ENCODE measurements at regions of chr14 and their contacts with region 1.

Region 1: GRCh38 chr14:20343092-20343861 is at the start of gene PARP2:
- DNase-seq: peak; percentile 85 to 97 (median 89)
- ATAC-seq: peak; percentile 96
- H3K4me3 ChIP-seq: peak within 1 kb of the TSS; percentile 68
- H3K27ac ChIP-seq: peak within 1 kb of the TSS; percentile 90
- H3K4me1 ChIP-seq: peaks cover 0 to 4% of the 10 kb centered on the region in 2 experiments; a peak in 2 of 5 replicates
- H3K27me3 ChIP-seq: no peaks in the 10 kb centered on the region
- CTCF ChIP-seq: no peak
- EP300 ChIP-seq: no peak; the same call in 1 of the 2 replicates
- POLR2A ChIP-seq: peak; percentile 97
- RAD21 ChIP-seq: no peak
- polyA plus RNA-seq, gene PARP2: 25.2 to 34.6 TPM

Region 2: DNA sequence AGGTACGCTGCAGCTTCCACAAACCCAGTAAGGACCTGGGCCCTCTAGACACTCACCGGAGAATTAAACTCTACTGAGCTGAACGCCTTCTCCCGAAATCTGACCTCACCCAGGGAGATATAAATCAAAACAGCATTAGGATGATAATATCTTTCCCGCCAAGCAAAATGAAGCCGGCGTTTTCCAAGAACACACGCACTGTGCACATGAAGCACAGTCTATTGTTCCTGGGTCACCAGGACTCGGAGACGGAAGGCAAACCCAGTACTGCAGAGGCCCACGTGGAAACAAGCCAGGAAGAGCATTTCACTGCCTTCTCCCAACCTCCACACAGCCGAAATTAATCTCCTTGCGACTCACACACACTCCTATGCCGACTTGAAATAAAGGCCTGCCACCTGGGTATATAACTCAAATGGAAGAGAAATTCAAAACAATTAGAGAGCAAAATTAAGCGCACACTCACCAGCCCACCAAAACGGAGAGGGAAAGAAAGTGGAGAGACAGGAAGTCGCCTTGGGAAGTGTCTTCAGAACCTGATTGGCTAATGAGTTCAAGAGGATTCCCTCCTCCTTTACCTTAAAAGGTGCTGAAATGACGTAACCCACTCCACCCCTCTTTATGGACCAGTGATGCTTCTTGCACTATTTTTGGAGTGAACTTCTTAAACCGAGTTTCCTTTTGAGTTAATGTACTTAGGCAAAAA is 10.3 kb before region 1 on chr14 and contains the start of gene CCNB1IP1:
- CTCF ChIA-PET with region 1: interaction called, 4 read pairs
- POLR2A ChIA-PET with region 1: interaction called, 10 read pairs
- in situ Hi-C with region 1: no loop called
- intact Hi-C with region 1: loop called (anchors 1 kb)
- DNase-seq: peak; percentile 70 to 91 (median 82)
- ATAC-seq: peak; percentile 91
- H3K4me3 ChIP-seq: peak within 1 kb of the TSS; percentile 87
- H3K27ac ChIP-seq: peak within 1 kb of the TSS; percentile 90
- H3K4me1 ChIP-seq: peaks cover 0 to 11% of the 10 kb centered on the region in 2 experiments; a peak in 2 of 5 replicates
- H3K27me3 ChIP-seq: no peaks in the 10 kb centered on the region
- CTCF ChIP-seq: no peak
- EP300 ChIP-seq: no peak
- POLR2A ChIP-seq: peak; percentile 94
- RAD21 ChIP-seq: no peak
- polyA plus RNA-seq, gene CCNB1IP1: 80.7 to 81.0 TPM

Region 3: GRCh38 chr14:20413045-20413799 is 69.9 kb after region 1 on chr14 and contains the start of gene TEP1:
- CTCF ChIA-PET with region 1: no interaction called
- POLR2A ChIA-PET with region 1: no interaction called
- in situ Hi-C with region 1: no loop called
- intact Hi-C with region 1: loop called (anchors 5 kb)
- DNase-seq: peak; percentile 60 to 77 (median 66)
- ATAC-seq: peak; percentile 94
- H3K4me3 ChIP-seq: peak within 1 kb of the TSS; percentile 93
- H3K27ac ChIP-seq: peak within 1 kb of the TSS; percentile 73
- H3K4me1 ChIP-seq: peaks cover 6 to 13% of the 10 kb centered on the region in 2 experiments; a peak in 4 of 5 replicates
- H3K27me3 ChIP-seq: no peaks in the 10 kb centered on the region
- CTCF ChIP-seq: no peak
- EP300 ChIP-seq: no peak
- POLR2A ChIP-seq: peak; percentile 77
- RAD21 ChIP-seq: no peak
- polyA plus RNA-seq, gene TEP1: 1.0 to 1.3 TPM

Region 4: GRCh38 chr14:20469242-20469889 is 126.1 kb after region 1 on chr14 and contains the start of gene PNP:
- CTCF ChIA-PET with region 1: no interaction called
- POLR2A ChIA-PET with region 1: interaction called, 11 read pairs
- in situ Hi-C with region 1: no loop called
- intact Hi-C with region 1: no loop called
- DNase-seq: peak; percentile 90 to 96 (median 91)
- ATAC-seq: peak; percentile 97
- H3K4me3 ChIP-seq: peak within 1 kb of the TSS; percentile 82
- H3K27ac ChIP-seq: peak within 1 kb of the TSS; percentile 76
- H3K4me1 ChIP-seq: peaks cover 5 to 15% of the 10 kb centered on the region in 2 experiments; a peak in 3 of 5 replicates
- H3K27me3 ChIP-seq: no peaks in the 10 kb centered on the region
- CTCF ChIP-seq: no peak
- EP300 ChIP-seq: no peak
- POLR2A ChIP-seq: peak; percentile 99
- RAD21 ChIP-seq: no peak
- polyA plus RNA-seq, gene PNP: 96.2 to 137 TPM